Gastrocnemius medialis (tissue), 4 donors: ENCODE measurements at regions of chr2 and their contacts with region 1.

Region 1: GRCh38 chr2:69811018-69811417 is 18.4 kb upstream of the GMCL1 start:
- DNase-seq: no peak
- ATAC-seq: no peak
- H3K4me3 ChIP-seq: no peak overlapping the region
- H3K27ac ChIP-seq: no peak overlapping the region
- H3K4me1 ChIP-seq: no peaks in the 10 kb centered on the region
- H3K27me3 ChIP-seq: no peaks in the 10 kb centered on the region
- CTCF ChIP-seq: no peak
- POLR2A ChIP-seq: no peak

Region 2: GRCh38 chr2:69559442-69560146 is 251.4 kb before region 1 on chr2:
- in situ Hi-C with region 1: loop called in 3 of 4 experiments (anchors 5 to 25 kb)
- intact Hi-C with region 1: loop called (anchors 5 kb)
- DNase-seq: peak in 1 of 2 donors; percentile 53
- ATAC-seq: peak; percentile 95 to 97
- H3K4me3 ChIP-seq: no peak overlapping the region
- H3K27ac ChIP-seq: peak overlapping the region in 3 of 4 donors; percentile 10 to 33 (median 11)
- H3K4me1 ChIP-seq: peaks cover 20 to 54% of the 10 kb centered on the region in 2 donors
- H3K27me3 ChIP-seq: no peaks in the 10 kb centered on the region
- CTCF ChIP-seq: peak; percentile 75 to 85 (median 78)
- POLR2A ChIP-seq: no peak

Region 3: DNA sequence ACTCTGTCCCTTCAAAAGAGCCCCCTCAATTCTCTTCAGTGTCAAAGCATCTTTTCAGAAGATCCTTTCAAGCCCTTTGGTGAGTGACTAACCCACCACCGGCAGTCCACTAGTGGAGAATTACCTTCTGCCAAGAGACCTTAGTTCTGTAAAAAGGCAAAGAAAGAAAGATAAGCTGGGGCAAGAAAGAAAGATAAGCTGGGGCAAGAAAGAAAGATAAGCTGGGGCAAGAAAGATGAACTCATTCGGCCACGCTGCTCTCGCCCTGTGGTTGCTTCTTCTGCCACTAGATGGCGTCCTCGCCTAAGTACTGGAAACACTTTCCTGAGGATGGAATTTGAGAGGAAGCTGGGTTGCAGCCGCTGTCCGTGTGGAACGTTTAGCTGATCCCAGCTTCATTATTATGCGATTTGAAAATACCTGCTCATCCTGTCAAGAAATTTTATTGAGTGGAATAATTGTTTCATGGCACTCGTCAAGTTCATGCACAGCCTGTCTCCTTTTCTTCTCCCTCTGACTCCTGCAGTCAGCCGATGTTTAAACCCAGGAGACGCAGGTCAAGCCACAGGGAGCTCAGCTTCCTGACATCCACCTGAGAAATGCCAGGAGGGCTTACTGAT is 86.4 kb before region 1 on chr2:
- in situ Hi-C with region 1: loop called (anchors 5 kb)
- intact Hi-C with region 1: no loop called
- DNase-seq: peak; percentile 64 to 73
- ATAC-seq: peak; percentile 92 to 96
- H3K4me3 ChIP-seq: peak overlapping the region; percentile 33 to 53 (median 40)
- H3K27ac ChIP-seq: no peak overlapping the region
- H3K4me1 ChIP-seq: peaks cover 5 to 7% of the 10 kb centered on the region in 2 donors
- H3K27me3 ChIP-seq: no peaks in the 10 kb centered on the region
- CTCF ChIP-seq: peak; percentile 94 to 96 (median 96)
- POLR2A ChIP-seq: no peak

Region 4: DNA sequence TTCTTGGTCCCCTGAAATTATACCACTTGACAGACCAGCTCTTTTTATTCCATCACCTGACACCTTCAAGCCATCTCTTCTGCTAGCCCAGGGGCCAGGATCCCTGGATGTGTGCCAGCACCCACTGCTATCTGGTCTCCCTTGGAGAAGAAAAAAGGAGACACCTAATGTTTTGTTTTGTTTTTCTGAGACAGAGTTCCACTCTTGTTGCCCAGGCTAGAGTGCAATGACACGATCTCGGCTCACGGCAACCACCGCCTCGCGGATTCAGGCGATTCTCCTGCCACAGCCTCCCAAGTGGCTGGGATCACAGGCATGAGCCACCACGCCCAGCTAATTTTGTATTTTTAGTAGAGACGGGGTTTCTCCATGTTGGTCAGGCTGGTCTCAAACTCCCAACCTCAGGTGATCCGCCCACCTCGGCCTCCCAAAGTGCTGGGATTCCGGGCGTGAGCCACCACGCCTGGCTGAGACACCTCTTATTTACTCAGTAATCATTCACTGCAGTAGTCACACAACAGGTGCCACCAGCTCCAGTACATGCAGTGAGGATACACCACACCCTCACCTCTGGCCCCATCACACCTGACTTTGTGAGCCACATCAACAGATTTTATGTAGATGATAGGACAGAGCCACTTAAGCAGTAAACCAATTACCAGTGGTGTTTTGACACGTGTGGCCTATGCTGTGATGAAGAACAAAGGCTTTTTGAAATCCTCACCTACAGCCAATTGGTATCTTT is 233.4 kb after region 1 on chr2:
- in situ Hi-C with region 1: no loop called
- intact Hi-C with region 1: no loop called
- DNase-seq: no peak
- ATAC-seq: no peak
- H3K4me3 ChIP-seq: no peak overlapping the region
- H3K27ac ChIP-seq: peak overlapping the region; percentile 63 to 85 (median 77)
- H3K4me1 ChIP-seq: peaks cover 28 to 29% of the 10 kb centered on the region in 2 donors
- H3K27me3 ChIP-seq: no peaks in the 10 kb centered on the region
- CTCF ChIP-seq: no peak
- POLR2A ChIP-seq: no peak